Lower lobe of right lung (tissue), 2 donors: ENCODE measurements at regions of chr15 and their contacts with region 1.

Region 1: DNA sequence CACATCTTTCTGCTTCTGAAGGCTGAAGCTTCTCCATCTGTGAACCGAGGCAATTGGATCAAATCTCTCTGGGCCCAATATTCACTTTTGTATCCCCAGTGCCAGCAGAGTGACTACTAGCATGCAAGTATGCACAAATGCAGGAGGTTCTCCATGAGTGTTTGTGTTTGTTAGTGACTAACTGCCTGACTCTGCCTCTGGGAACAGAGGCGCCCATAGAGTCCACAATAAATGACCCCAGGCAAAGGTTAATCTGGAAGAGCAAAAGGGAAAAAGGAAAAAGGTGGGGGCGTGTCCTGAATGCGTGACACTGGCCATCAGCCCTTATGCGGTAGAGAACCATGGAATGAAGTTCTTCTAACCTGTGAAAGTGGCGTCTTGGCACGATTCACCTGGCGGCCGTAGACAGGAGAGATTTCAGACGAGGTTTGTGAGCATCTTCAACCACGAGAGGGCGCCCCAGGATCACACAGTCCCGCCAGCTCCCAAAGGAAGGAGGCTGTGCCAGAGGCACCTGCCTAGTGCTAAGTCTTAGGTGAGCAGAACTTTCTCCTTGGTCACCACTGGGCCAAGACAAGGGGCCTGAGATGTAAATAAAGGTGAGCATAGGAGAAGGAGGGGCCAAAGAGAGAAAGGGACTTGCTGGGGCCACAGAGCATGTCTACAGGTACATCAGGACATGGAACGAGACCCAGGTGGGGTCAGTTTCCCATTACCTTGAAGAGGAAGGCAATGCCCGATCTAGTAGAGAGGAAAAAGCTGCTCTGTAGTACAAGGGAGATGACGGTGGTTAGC is 44.2 kb downstream of the RBPMS2 start:
- DNase-seq: peak; percentile 90
- ATAC-seq: peak; percentile 90
- H3K4me3 ChIP-seq: no peak overlapping the region
- H3K27ac ChIP-seq: no peak overlapping the region
- H3K4me1 ChIP-seq: peaks cover 7% of the 10 kb centered on the region
- H3K27me3 ChIP-seq: no peaks in the 10 kb centered on the region
- CTCF ChIP-seq: peak; percentile 86

Region 2: GRCh38 chr15:64686216-64686631 is 45.0 kb before region 1 on chr15:
- intact Hi-C with region 1: loop called (anchors 5 kb)
- DNase-seq: no peak
- ATAC-seq: peak in 1 of 2 donors; percentile 49
- H3K4me3 ChIP-seq: no peak overlapping the region
- H3K27ac ChIP-seq: no peak overlapping the region
- H3K4me1 ChIP-seq: peaks cover 1% of the 10 kb centered on the region
- H3K27me3 ChIP-seq: no peaks in the 10 kb centered on the region
- CTCF ChIP-seq: peak; percentile 64